IMR-90 (cell line): ENCODE measurements at regions of chr1 and their contacts with region 1.

Region 1: DNA sequence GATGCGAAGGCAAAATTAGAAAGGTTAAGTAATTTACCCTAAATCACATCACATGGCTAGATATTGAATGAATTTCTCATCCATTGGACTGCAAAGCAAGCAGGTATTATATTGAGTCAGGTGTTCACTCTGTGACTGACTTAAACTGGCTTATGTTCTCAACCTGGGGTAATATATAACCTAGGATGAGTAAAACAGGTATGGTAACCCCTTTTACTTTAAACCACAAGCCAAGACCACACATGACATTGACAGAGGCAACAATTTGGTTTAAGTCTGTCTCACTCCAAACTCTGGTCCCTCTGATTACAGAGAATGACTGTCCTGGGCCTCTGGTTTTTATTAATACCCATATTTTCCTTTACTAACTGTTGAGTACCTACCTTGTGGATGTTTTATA is 33.3 kb downstream of the MAEL start:
- DNase-seq: no peak
- ATAC-seq: no peak
- H3K4me3 ChIP-seq: no peak overlapping the region
- H3K27ac ChIP-seq: no peak overlapping the region
- H3K4me1 ChIP-seq: no peaks in the 10 kb centered on the region
- H3K27me3 ChIP-seq: no peaks in the 10 kb centered on the region
- CTCF ChIP-seq: no peak
- POLR2A ChIP-seq: no peak
- RAD21 ChIP-seq: no peak

Region 2: DNA sequence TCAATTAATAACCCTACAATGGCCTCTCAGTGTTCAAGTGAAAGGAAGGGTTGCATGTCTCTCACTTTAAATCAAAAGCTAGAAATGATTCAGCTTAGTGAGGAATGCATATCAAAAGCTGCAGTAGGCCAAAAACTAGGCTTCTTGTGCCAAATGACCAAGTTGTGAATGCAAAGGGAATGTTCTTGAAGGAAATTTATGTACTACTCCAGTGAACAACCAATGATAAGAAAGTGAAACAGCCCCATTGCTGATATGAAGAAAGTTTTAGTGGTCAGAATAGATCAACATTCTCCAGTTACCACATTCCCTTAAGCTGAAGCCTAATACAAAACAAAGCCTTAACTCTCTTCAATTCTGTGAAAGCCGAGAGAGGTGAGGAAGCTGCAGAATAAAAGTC is 23.3 kb before region 1 on chr1:
- CTCF ChIA-PET with region 1: no interaction called
- POLR2A ChIA-PET with region 1: interaction called, 12 read pairs
- dilution Hi-C with region 1: no loop called
- in situ Hi-C with region 1: no loop called
- intact Hi-C with region 1: no loop called
- DNase-seq: peak; percentile 16
- ATAC-seq: no peak; the same call in 1 of the 2 replicates
- H3K4me3 ChIP-seq: no peak overlapping the region
- H3K27ac ChIP-seq: no peak overlapping the region
- H3K4me1 ChIP-seq: no peaks in the 10 kb centered on the region
- H3K27me3 ChIP-seq: no peaks in the 10 kb centered on the region
- CTCF ChIP-seq: no peak
- POLR2A ChIP-seq: no peak
- RAD21 ChIP-seq: no peak

Region 3: DNA sequence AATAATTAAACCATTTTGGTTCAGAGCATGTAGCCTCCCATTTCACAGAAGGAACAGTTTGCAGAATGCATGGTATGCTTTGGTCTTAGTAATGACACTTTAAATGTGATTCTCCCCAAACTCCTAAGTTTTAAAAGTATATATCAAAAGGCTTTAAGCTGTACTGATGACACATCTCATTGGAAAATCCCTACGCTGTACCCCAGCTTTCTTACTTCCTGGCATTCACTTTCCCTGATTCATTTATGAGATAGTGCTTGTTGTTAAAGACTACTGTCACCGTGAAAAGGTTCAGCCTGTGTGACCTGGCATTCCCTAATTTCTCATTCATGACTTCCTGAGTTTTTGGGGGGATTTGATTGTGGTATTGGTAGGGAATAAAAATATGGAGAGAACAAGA is 752.8 kb after region 1 on chr1:
- CTCF ChIA-PET with region 1: no interaction called
- POLR2A ChIA-PET with region 1: no interaction called
- dilution Hi-C with region 1: no loop called
- in situ Hi-C with region 1: no loop called
- intact Hi-C with region 1: no loop called
- DNase-seq: peak; percentile 77
- ATAC-seq: no peak
- H3K4me3 ChIP-seq: no peak overlapping the region
- H3K27ac ChIP-seq: no peak overlapping the region
- H3K4me1 ChIP-seq: peaks cover 8% of the 10 kb centered on the region
- H3K27me3 ChIP-seq: no peaks in the 10 kb centered on the region
- CTCF ChIP-seq: no peak
- POLR2A ChIP-seq: no peak
- RAD21 ChIP-seq: no peak